ENCODE measurements at regions of chr1 and their contacts with region 1.

Region 1: DNA sequence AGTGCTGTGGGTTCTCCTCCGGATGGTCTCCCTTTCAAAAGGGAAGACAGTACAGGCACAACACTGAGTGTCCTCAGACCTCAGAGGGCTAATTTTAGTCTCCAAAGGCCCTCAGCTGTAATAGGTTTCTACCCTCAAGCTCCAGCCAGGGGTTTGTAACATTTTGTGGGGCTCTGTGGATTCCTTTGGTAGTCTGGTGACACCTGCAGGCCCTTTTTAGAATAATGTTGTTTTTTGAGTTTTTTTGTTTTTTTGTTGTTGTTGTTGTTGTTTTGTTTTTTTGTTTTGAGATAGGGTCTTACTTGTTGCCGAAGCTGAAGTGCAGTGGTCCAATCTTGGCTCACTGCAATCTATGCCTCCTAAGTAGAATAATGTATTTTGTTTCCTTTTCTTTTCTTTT is 15.0 kb upstream of the TMEM201 start:
- DNase-seq: no peak
- H3K4me3 ChIP-seq: no peak overlapping the region
- H3K27ac ChIP-seq: no peak overlapping the region
- H3K4me1 ChIP-seq: no peaks in the 10 kb centered on the region
- H3K27me3 ChIP-seq: no peaks in the 10 kb centered on the region
- CTCF ChIP-seq: peak in 1 of 3 experiments; percentile 12
- POLR2A ChIP-seq: no peak

Region 2: GRCh38 chr1:9494929-9495758 is 78.6 kb before region 1 on chr1:
- intact Hi-C with region 1: loop called (anchors 5 kb)
- DNase-seq: no peak
- H3K4me3 ChIP-seq: peak overlapping the region; percentile 21 to 32
- H3K27ac ChIP-seq: no peak overlapping the region
- H3K4me1 ChIP-seq: peaks cover 14% of the 10 kb centered on the region
- H3K27me3 ChIP-seq: no peaks in the 10 kb centered on the region
- CTCF ChIP-seq: peak; percentile 86 to 99 (median 94)
- POLR2A ChIP-seq: no peak

Region 3: DNA sequence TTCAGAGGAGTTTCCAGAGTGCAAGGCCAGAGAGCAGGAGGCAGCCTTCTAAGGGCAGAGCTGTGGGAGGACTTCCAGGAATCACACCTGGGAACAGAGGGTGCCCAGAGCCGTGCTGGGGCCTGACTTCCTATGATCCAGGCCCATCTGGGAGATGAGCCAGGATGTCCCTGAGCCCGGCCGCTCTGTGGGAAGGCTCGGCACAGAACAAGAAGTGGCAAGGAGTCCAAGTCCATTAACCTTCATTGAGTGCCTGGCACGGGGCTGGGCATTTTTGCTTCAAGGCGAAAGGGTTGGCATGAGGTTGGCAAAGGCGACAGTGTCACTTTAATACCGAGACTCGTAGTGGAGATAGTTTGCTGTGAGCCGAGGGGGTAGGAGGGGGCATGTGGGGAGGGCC is 33.2 kb after region 1 on chr1:
- intact Hi-C with region 1: no loop called
- DNase-seq: no peak
- H3K4me3 ChIP-seq: no peak overlapping the region
- H3K27ac ChIP-seq: no peak overlapping the region
- H3K4me1 ChIP-seq: no peaks in the 10 kb centered on the region
- H3K27me3 ChIP-seq: no peaks in the 10 kb centered on the region
- CTCF ChIP-seq: no peak
- POLR2A ChIP-seq: no peak

Region 4: GRCh38 chr1:9626201-9626608 is 52.5 kb after region 1 on chr1:
- intact Hi-C with region 1: no loop called
- DNase-seq: no peak
- H3K4me3 ChIP-seq: no peak overlapping the region
- H3K27ac ChIP-seq: no peak overlapping the region
- H3K4me1 ChIP-seq: peaks cover 13% of the 10 kb centered on the region
- H3K27me3 ChIP-seq: no peaks in the 10 kb centered on the region
- CTCF ChIP-seq: no peak
- POLR2A ChIP-seq: no peak

Region 5: GRCh38 chr1:9651565-9652378 is 78.0 kb after region 1 on chr1 and contains the start of gene PIK3CD:
- intact Hi-C with region 1: no loop called
- DNase-seq: no peak
- H3K4me3 ChIP-seq: peak within 1 kb of the TSS; percentile 35 to 44
- H3K27ac ChIP-seq: peak within 1 kb of the TSS; percentile 16
- H3K4me1 ChIP-seq: peaks cover 8% of the 10 kb centered on the region
- H3K27me3 ChIP-seq: no peaks in the 10 kb centered on the region
- CTCF ChIP-seq: no peak
- POLR2A ChIP-seq: no peak
- total RNA-seq, gene PIK3CD: 13.0 TPM